ENCODE measurements at regions of chr20 and their contacts with region 1.

Region 1: DNA sequence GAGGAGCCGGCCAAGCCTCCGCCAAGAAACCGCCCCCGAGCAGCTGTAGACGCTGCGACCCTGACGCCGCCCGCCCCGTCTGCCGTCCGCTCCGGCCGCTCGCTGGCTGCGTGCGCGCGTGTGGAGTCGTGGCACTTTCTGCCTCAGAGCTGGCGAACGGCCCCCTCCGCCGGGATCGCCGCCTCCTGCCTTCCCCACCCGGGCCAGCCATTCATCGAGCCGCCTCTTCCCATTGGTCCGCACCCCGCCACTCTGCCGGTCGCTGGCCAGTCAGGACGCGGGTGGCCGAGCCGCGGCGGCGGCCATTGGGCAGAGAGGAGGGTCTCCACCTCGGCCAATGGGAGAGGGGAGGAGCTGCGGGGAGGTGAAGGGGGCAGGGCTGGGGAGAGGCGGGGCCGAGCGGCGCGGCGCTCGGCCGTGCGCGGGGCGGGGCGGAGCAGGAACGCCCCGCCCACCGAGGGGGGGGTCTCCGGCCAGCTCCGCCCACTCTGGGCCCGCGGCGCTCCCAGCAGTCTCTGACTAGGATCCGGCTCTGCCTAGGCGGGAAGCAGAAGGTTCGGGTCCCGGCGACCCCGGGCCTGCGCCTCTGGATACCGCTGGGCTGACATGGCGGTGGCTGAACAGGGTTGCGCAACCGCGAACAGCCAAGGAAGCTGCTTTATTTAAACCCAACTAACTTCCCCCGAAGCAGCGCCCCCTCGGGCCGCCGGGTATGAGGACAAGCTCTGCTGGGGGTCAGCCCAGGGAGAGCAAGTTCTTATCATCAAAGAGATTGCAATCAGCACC is at the start of gene RRBP1:
- DNase-seq: peak; percentile 97
- H3K4me3 Mint-ChIP-seq: peak within 1 kb of the TSS; percentile 82
- H3K27ac Mint-ChIP-seq: peak within 1 kb of the TSS; percentile 90
- H3K4me1 Mint-ChIP-seq: peaks cover 29% of the 10 kb centered on the region
- H3K27me3 Mint-ChIP-seq: peaks cover 37% of the 10 kb centered on the region
- total RNA-seq, gene RRBP1: 50.8 to 52.1 TPM

Region 2: DNA sequence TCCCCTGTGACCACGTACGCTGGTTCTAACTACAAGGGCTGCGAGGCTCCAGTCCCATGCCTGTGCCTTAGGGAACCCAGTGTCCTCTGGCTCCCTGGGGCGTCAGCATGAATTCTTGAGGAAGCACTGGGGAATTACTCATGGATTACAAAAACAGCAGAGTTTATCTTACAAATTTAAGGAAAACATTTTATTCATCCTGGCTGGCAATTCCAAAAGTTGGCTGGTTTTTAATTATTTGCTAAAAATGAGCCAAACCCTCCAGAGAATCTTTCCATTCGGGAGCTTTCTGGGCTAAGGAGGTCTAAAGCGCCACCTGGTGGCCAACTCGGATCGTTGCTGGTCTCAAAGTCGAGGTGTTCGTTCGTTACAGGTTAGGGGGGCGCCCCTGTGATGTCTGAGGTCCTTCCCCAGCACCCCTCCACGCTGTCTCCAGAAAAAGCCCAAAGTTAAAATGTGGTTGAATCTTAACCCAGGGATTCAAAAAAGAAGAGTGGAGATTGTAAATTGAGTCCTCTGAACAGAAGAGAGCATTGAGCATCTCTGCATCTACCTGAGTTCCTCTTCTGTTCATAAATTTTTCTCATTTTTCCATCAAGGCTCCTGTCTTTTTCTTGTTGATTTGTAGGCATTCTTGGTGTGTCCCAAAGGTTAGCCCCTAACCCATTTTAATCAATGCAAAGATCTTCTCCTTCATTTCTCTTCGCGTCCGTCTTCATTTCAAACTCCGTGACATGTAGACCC is 250.5 kb before region 1 on chr20:
- CTCF ChIA-PET with region 1: no interaction called
- POLR2A ChIA-PET with region 1: no interaction called
- DNase-seq: peak; percentile 56
- H3K4me3 Mint-ChIP-seq: no peak overlapping the region
- H3K27ac Mint-ChIP-seq: no peak overlapping the region
- H3K4me1 Mint-ChIP-seq: no peaks in the 10 kb centered on the region
- H3K27me3 Mint-ChIP-seq: peaks cover 11% of the 10 kb centered on the region

Region 3: DNA sequence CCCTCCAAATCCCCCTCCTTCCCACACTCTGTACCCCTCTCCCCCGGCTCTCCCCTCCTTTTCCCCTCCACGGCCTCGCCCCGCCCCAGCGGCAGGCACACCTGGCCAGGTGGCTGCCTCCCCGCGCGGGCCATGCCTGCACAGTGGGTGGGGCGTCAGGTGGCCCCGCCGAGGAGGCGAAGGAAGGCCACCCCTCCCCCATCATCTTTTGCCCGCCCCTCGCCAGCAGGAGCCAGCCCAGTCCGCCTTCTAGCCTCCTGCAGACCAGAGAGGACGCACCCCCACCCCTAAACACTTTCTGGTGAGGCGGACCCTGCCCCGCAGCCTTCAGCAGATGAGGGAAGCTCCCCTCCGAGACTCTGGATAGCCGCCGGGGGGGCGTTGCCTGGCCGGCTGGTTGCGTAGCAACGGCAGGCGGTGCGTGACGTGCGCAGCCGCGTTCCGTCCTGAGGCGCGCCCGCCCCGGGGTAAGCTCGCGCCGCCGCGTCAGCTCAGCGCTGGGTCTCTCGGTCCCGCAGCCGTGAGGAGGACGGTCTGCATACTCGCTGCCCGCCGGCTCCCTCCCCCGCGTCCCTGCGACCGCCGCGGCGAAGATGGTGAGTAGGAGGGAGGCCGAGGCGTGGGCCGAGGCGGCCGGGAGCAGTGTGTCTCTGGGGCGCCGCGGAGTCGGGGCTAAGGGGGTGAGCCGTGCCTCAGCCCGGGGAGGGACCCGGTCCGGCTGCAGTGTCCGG is 112.5 kb before region 1 on chr20 and contains the start of gene DSTN:
- CTCF ChIA-PET with region 1: interaction called, 14 read pairs
- POLR2A ChIA-PET with region 1: no interaction called
- DNase-seq: peak; percentile 89
- H3K4me3 Mint-ChIP-seq: peak within 1 kb of the TSS; percentile 91
- H3K27ac Mint-ChIP-seq: peak within 1 kb of the TSS; percentile 91
- H3K4me1 Mint-ChIP-seq: peaks cover 29% of the 10 kb centered on the region
- H3K27me3 Mint-ChIP-seq: peaks cover 18% of the 10 kb centered on the region
- total RNA-seq, gene DSTN: 77.4 to 83.3 TPM

Region 4: DNA sequence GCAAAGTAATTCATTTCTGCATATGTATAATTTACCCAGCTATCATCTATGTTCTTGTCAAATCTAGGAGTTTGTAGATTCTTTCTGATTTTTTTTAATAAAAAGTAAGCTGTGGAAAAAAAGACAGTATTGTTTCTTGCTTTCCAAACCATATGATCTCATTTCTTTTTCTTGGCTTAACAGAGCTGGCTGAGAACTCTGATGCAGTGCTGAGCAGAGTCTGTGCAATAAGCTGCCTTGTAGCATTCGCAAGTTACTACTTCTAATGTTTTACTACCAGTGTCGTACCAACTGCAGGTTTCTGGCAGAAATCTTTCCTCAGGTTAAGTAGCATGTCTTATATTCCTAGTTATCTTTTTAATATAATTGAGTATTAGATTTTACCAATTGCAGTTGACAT is 15.8 kb before region 1 on chr20:
- CTCF ChIA-PET with region 1: interaction called, 11 read pairs
- POLR2A ChIA-PET with region 1: no interaction called
- DNase-seq: no peak
- H3K4me3 Mint-ChIP-seq: no peak overlapping the region
- H3K27ac Mint-ChIP-seq: no peak overlapping the region
- H3K4me1 Mint-ChIP-seq: peaks cover 39% of the 10 kb centered on the region
- H3K27me3 Mint-ChIP-seq: no peaks in the 10 kb centered on the region

Region 5: GRCh38 chr20:17699931-17700657 is 17.8 kb after region 1 on chr20 and contains the start of gene BANF2:
- CTCF ChIA-PET with region 1: interaction called, 20 read pairs
- POLR2A ChIA-PET with region 1: no interaction called
- DNase-seq: no peak
- H3K4me3 Mint-ChIP-seq: no peak within 1 kb of the TSS
- H3K27ac Mint-ChIP-seq: no peak within 1 kb of the TSS
- H3K4me1 Mint-ChIP-seq: no peaks in the 10 kb centered on the region
- H3K27me3 Mint-ChIP-seq: no peaks in the 10 kb centered on the region
- total RNA-seq, gene BANF2: not detected

Region 6: DNA sequence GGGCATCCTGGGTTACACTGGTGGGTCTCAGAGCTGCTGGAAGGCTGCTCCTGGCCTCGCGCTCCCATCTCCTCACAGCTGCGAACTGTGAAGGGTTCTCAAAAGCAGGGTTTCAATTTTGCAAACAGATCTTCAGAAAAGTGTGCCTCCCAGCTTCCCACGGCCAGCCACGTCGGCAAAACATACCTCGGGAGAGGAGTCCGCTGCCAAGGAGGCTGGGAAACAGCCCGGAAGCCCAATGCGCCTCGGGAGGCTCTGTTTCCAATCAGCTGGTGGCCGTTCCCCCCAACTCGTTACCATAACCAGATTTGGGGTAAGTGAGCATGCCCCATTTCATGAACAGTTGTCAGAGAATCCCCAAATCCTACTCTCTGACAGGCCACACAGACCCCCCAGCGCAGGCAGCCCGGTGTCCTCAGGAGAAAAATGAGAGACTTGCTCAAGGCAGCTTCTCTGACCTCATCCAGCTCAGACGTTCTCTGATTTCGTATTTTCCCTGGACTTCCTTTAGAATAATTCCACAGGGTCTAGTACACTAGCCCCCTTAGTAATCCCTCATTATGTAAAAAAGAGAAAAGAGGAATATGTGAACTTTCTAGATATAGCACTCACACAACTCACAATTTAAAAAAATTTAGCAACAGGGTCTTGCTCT is 187.9 kb after region 1 on chr20:
- CTCF ChIA-PET with region 1: interaction called, 17 read pairs
- POLR2A ChIA-PET with region 1: no interaction called
- DNase-seq: no peak
- H3K4me3 Mint-ChIP-seq: no peak overlapping the region
- H3K27ac Mint-ChIP-seq: no peak overlapping the region
- H3K4me1 Mint-ChIP-seq: peaks cover 15% of the 10 kb centered on the region
- H3K27me3 Mint-ChIP-seq: peaks cover 15% of the 10 kb centered on the region